HepG2 (cell line): ENCODE measurements at regions of chr15 and their contacts with region 1.

Region 1: GRCh38 chr15:81410318-81410753 is 36.3 kb upstream of the TMC3 start:
- DNase-seq: peak; percentile 20
- ATAC-seq: peak; percentile 49; the same call in 1 of the 3 replicates
- H3K4me3 ChIP-seq: no peak overlapping the region
- H3K27ac ChIP-seq: no peak overlapping the region
- H3K4me1 ChIP-seq: no peaks in the 10 kb centered on the region
- H3K27me3 ChIP-seq: 0 out of 5 replicates have a peak, but pooled peaks cover 0 to 3% of the 10 kb centered on the region in 2 experiments
- CTCF ChIP-seq: peak; percentile 39
- EP300 ChIP-seq: no peak
- POLR2A ChIP-seq: no peak
- RAD21 ChIP-seq: 0 out of 2 replicates have a peak, but pooled peaks have one; percentile 16

Region 2: DNA sequence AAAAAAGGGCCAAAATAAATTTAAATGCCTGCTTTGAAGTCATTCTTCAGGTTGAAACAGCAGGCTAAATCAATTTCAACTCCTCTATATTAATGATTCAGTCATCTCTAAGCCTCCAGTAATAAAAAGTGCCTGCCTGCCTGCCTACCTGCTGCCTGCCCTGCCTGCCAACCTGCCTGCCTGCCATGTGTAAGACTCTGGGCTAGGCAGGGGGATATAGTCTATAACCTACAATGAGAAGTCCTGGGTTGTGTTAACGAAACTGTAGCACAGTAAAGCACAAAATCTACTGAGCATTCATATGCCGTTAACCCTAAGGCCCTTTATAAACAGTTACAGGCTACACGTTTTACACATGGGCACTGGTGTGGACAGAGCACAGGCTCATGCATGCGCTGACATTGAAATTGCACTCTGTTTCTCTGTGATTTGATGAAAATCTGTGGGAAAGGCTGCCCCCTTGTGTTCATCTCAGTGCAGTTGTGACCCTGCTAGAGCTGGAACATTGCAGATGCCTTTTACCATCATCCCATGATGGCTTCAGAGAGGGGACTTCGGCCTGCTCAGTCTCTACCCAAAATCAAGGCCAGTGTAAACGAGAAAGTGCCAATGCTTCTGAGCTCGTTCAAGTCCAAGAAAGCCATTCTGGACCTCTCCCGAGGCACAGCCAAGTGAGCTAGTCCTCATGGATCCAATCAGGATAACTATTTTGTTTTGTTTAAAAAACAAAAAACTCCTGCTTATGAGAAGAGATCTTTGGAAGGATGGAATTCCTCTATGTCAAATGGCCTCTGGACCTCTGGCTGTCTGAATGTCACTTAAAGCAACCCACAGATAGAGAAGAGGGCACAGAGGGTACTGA is 787.6 kb after region 1 on chr15:
- CTCF ChIA-PET with region 1: no interaction called
- POLR2A ChIA-PET with region 1: no interaction called
- in situ Hi-C with region 1: no loop called
- intact Hi-C with region 1: loop called (anchors 10 kb)
- DNase-seq: peak; percentile 56
- ATAC-seq: peak; percentile 97
- H3K4me3 ChIP-seq: no peak overlapping the region
- H3K27ac ChIP-seq: no peak overlapping the region
- H3K4me1 ChIP-seq: no peaks in the 10 kb centered on the region
- H3K27me3 ChIP-seq: no peaks in the 10 kb centered on the region
- CTCF ChIP-seq: peak; percentile 85
- EP300 ChIP-seq: no peak
- POLR2A ChIP-seq: no peak
- RAD21 ChIP-seq: peak; percentile 36